ENCODE measurements at regions of chr7 and their contacts with region 1.

Region 1: DNA sequence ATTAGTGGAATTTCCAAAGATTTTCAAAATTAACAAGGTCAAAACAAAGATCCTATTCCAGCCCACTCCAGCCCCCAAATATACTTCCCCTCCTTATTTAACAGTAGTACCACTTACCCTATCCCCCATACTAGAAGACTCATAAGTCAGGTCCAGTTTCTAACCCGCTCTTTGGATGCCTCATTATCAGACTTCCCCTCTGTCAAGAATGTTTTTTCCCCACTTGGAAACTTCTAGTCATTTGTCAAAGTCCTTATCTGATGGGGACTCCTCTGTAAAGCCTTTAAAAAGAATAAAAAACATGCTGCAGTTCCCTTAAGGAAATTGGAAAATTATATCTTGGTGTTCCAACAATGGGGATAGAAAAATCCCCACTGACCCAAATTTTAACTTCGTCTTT is 70.1 kb downstream of the IMMP2L start:
- DNase-seq: no peak
- H3K4me3 ChIP-seq: no peak overlapping the region
- H3K27ac ChIP-seq: no peak overlapping the region
- H3K4me1 ChIP-seq: no peaks in the 10 kb centered on the region
- H3K27me3 ChIP-seq: no peaks in the 10 kb centered on the region
- CTCF ChIP-seq: no peak
- POLR2A ChIP-seq: no peak

Region 2: DNA sequence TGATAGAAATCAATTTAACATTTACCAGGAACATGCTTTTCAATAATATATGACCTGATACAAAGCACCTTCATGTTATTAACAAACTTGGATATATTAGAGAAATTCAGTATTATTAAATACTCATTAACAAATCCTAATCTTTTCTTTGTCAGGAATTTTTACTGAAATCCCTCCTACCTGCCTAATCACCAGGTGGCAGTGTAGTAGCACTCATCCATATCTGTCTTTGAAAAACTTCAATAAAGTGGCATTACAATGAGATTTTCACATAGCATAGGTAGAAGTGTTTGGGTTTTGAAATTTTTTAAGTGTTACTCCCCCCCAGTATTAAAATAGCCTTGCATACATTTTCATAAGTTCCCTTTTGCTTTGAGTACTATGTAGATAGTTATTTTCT is 1647.9 kb before region 1 on chr7:
- intact Hi-C with region 1: loop called (anchors 5 kb)
- DNase-seq: no peak
- H3K4me3 ChIP-seq: no peak overlapping the region
- H3K27ac ChIP-seq: no peak overlapping the region
- H3K4me1 ChIP-seq: no peaks in the 10 kb centered on the region
- H3K27me3 ChIP-seq: no peaks in the 10 kb centered on the region
- CTCF ChIP-seq: no peak
- POLR2A ChIP-seq: no peak